Left colon (tissue), 2 donors: ENCODE measurements at regions of chr14 and their contacts with region 1.

Region 1: DNA sequence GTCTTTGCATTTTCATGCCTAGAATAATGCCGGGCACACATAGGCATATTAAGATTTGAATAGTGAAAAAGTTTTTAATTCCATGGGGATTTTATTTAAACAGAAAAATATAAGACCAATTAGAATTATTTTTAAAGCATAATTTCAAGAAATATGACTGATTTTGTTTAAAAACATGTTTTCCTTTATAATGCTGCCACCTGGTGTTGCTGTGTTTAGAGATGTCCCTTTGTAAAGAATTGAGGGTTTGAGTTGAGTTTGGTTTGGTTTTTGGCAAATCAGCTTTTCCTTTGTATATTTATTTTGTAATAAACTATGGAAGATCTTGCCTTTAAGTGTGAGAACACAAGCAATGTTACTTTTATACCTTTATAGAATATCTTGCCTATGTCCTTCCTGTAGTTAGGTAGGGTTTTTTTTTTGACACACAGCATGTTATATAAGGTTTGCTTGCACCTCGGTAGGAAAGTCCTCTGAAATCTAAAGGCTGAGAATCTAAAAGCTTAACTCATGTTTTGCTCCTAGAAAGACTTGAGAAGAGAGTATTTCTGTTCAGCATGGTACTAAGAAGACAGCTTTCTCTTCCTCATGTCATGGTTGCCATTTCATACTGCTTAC is 31.4 kb upstream of the SNAPC1 start:
- DNase-seq: no peak
- ATAC-seq: no peak

Region 2: DNA sequence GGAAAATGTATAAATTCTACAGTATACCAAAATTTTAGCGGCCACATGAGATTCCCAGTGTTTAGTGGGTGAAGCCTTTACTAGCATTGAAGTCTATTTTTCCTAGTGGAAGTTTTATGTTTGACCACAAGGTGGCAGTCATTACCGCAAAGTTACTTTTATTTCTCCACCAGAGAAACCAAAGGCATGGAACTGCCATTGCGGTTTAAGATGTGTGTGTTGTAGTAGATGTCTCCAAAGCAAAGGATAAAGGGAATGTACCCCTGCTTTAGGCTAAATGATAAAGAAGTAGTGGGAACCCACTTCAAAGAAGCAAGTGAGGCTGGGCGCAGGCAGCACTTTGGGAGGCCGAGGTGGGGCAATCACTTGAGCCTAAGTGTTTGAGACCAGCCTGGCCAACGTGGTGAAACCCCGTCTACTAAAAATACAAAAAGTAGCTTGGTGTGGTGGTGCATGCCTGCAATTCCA is 269.0 kb before region 1 on chr14:
- intact Hi-C with region 1: loop called in 1 of 2 experiments (anchors 10 kb)
- DNase-seq: no peak
- ATAC-seq: peak; percentile 76

Region 3: GRCh38 chr14:61662437-61663311 is 68.2 kb before region 1 on chr14:
- intact Hi-C with region 1: no loop called
- DNase-seq: peak in 1 of 2 donors; percentile 42
- ATAC-seq: peak; percentile 61